ENCODE measurements at regions of chr7 and their contacts with region 1.

Region 1: GRCh38 chr7:50632561-50633413 is 67.6 kb upstream of the DDC start:
- DNase-seq: peak; percentile 57 to 62 (median 60)
- H3K4me3 ChIP-seq: no peak overlapping the region
- H3K4me3 Mint-ChIP-seq: no peak overlapping the region
- H3K27ac ChIP-seq: no peak overlapping the region
- H3K27ac Mint-ChIP-seq: peak overlapping the region in 1 of 7 donors; percentile 15
- H3K4me1 ChIP-seq: no peaks in the 10 kb centered on the region
- H3K4me1 Mint-ChIP-seq: peaks cover 3 to 6% (median 5%) of the 10 kb centered on the region in 4 donors
- H3K27me3 ChIP-seq: no peaks in the 10 kb centered on the region
- H3K27me3 Mint-ChIP-seq: peaks cover 3 to 5% of the 10 kb centered on the region in 2 donors

Region 2: GRCh38 chr7:50092579-50093491 is 540.0 kb before region 1 on chr7 and contains the start of gene ZPBP:
- CTCF ChIA-PET with region 1: interaction called, 7 read pairs
- POLR2A ChIA-PET with region 1: interaction called, 3 read pairs
- intact Hi-C with region 1: loop called (anchors 1 kb)
- DNase-seq: peak; percentile 62 to 72 (median 69)
- H3K4me3 ChIP-seq: peak within 1 kb of the TSS; percentile 44 to 66
- H3K4me3 Mint-ChIP-seq: peak within 1 kb of the TSS; percentile 88 to 95 (median 88)
- H3K27ac ChIP-seq: peak within 1 kb of the TSS; percentile 23
- H3K27ac Mint-ChIP-seq: peak within 1 kb of the TSS; percentile 45 to 88 (median 80)
- H3K4me1 ChIP-seq: peaks cover 4% of the 10 kb centered on the region
- H3K4me1 Mint-ChIP-seq: peaks cover 4 to 7% (median 7%) of the 10 kb centered on the region in 4 donors
- H3K27me3 ChIP-seq: no peaks in the 10 kb centered on the region
- H3K27me3 Mint-ChIP-seq: no peaks in the 10 kb centered on the region
- total RNA-seq, gene ZPBP: not detected

Region 3: GRCh38 chr7:50595491-50596102 is 37.2 kb before region 1 on chr7:
- CTCF ChIA-PET with region 1: interaction called, 94 read pairs
- POLR2A ChIA-PET with region 1: interaction called, 4 read pairs
- intact Hi-C with region 1: loop called (anchors 1 kb)
- DNase-seq: peak in 4 of 5 donors; percentile 15 to 38 (median 28)
- H3K4me3 ChIP-seq: no peak overlapping the region
- H3K4me3 Mint-ChIP-seq: peak overlapping the region in 1 of 8 donors; percentile 32
- H3K27ac ChIP-seq: no peak overlapping the region
- H3K27ac Mint-ChIP-seq: peak overlapping the region in 4 of 7 donors; percentile 54 to 85 (median 70)
- H3K4me1 ChIP-seq: peaks cover 18% of the 10 kb centered on the region
- H3K4me1 Mint-ChIP-seq: peaks cover 13 to 18% (median 17%) of the 10 kb centered on the region in 4 donors
- H3K27me3 ChIP-seq: no peaks in the 10 kb centered on the region
- H3K27me3 Mint-ChIP-seq: peaks cover 0 to under 1% of the 10 kb centered on the region in 2 donors

Region 4: GRCh38 chr7:50621206-50621605 is 11.6 kb before region 1 on chr7:
- CTCF ChIA-PET with region 1: interaction called, 154 read pairs
- POLR2A ChIA-PET with region 1: no interaction called
- intact Hi-C with region 1: no loop called
- DNase-seq: no peak
- H3K4me3 ChIP-seq: no peak overlapping the region
- H3K4me3 Mint-ChIP-seq: no peak overlapping the region
- H3K27ac ChIP-seq: no peak overlapping the region
- H3K27ac Mint-ChIP-seq: no peak overlapping the region
- H3K4me1 ChIP-seq: no peaks in the 10 kb centered on the region
- H3K4me1 Mint-ChIP-seq: no peaks in the 10 kb centered on the region
- H3K27me3 ChIP-seq: peaks cover 3% of the 10 kb centered on the region
- H3K27me3 Mint-ChIP-seq: peaks cover 0 to 4% of the 10 kb centered on the region in 2 donors

Region 5: DNA sequence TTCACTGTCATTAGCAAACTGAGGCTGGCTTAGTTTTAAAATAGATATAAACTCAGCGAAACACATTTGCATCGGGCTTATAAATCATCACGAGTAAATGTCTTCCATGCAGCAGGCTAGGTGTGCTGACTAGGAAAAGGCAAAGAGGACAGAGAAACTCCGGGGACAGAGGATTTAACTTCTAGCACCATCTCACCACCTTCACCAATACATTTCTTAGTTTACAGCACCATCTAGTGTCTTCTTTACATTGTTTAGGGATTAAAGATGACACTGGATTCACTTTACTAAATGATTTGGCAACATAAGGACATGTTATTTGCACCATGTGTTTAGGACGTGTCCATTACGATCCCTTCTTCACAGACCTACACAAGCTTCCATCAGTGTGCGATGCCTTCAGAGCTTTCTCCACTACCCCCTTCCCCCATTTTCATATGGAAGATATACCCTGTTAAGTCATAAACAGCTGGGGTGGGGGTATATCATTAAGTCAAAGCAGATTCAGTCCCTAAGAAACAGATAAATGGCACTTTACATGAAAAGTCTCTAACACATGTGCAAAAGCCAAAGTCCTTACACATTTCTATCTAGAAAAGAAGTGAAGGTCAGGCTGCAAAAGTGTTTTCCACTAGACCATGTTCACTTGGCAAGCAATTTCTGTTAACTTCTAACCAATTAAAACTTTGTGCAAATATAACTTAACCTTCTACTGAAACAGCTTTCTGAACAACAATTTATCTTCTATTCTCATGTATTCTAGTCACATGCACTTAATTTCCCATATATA is 46.6 kb after region 1 on chr7:
- CTCF ChIA-PET with region 1: interaction called, 5 read pairs
- POLR2A ChIA-PET with region 1: no interaction called
- intact Hi-C with region 1: loop called (anchors 2 kb)
- DNase-seq: peak in 4 of 5 donors; percentile 51 to 64 (median 58)
- H3K4me3 ChIP-seq: no peak overlapping the region
- H3K4me3 Mint-ChIP-seq: no peak overlapping the region
- H3K27ac ChIP-seq: no peak overlapping the region
- H3K27ac Mint-ChIP-seq: no peak overlapping the region
- H3K4me1 ChIP-seq: no peaks in the 10 kb centered on the region
- H3K4me1 Mint-ChIP-seq: peaks cover 0 to 3% (median under 1%) of the 10 kb centered on the region in 4 donors
- H3K27me3 ChIP-seq: no peaks in the 10 kb centered on the region
- H3K27me3 Mint-ChIP-seq: peaks cover 0 to under 1% of the 10 kb centered on the region in 2 donors

Region 6: GRCh38 chr7:50751146-50751545 is 118.4 kb after region 1 on chr7:
- CTCF ChIA-PET with region 1: no interaction called
- POLR2A ChIA-PET with region 1: no interaction called
- intact Hi-C with region 1: no loop called
- DNase-seq: no peak
- H3K4me3 ChIP-seq: no peak overlapping the region
- H3K4me3 Mint-ChIP-seq: no peak overlapping the region
- H3K27ac ChIP-seq: no peak overlapping the region
- H3K27ac Mint-ChIP-seq: no peak overlapping the region
- H3K4me1 ChIP-seq: no peaks in the 10 kb centered on the region
- H3K4me1 Mint-ChIP-seq: peaks cover 8 to 12% (median 9%) of the 10 kb centered on the region in 4 donors
- H3K27me3 ChIP-seq: no peaks in the 10 kb centered on the region
- H3K27me3 Mint-ChIP-seq: no peaks in the 10 kb centered on the region